AG04450 (cell line): ENCODE measurements at regions of chr10 and their contacts with region 1.

Region 1: GRCh38 chr10:63157845-63158624 is 24.9 kb downstream of the NRBF2 start:
- DNase-seq: peak; percentile 86
- H3K4me3 ChIP-seq: no peak overlapping the region
- H3K27ac ChIP-seq: no peak overlapping the region
- H3K27me3 ChIP-seq: no peaks in the 10 kb centered on the region
- CTCF ChIP-seq: peak; percentile 79

Region 2: DNA sequence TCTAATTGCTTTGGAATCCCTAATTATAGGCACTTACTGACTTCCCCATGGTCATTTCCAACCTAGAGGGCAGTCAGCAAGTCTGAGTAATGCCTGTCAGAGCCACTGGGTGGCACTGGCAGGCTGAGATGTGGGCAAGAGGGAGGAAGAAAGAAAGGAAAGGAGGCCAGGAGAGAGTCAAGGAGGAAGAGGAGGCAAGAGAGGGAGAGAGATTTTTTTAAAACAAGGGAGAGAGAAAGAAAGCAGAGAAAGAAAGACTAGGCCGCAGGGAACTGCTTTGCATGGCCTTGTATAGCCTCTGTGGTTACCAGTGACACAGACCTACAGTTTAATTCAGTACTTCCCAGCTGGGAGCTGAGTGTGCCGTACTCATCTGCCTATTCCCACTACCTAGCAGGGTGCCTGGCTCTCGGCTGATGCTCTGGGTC is 563.9 kb before region 1 on chr10:
- CTCF ChIA-PET with region 1: interaction called, 23 read pairs
- POLR2A ChIA-PET with region 1: no interaction called
- DNase-seq: no peak
- H3K4me3 ChIP-seq: no peak overlapping the region
- H3K27ac ChIP-seq: no peak overlapping the region
- H3K27me3 ChIP-seq: no peaks in the 10 kb centered on the region
- CTCF ChIP-seq: peak; percentile 98

Region 3: DNA sequence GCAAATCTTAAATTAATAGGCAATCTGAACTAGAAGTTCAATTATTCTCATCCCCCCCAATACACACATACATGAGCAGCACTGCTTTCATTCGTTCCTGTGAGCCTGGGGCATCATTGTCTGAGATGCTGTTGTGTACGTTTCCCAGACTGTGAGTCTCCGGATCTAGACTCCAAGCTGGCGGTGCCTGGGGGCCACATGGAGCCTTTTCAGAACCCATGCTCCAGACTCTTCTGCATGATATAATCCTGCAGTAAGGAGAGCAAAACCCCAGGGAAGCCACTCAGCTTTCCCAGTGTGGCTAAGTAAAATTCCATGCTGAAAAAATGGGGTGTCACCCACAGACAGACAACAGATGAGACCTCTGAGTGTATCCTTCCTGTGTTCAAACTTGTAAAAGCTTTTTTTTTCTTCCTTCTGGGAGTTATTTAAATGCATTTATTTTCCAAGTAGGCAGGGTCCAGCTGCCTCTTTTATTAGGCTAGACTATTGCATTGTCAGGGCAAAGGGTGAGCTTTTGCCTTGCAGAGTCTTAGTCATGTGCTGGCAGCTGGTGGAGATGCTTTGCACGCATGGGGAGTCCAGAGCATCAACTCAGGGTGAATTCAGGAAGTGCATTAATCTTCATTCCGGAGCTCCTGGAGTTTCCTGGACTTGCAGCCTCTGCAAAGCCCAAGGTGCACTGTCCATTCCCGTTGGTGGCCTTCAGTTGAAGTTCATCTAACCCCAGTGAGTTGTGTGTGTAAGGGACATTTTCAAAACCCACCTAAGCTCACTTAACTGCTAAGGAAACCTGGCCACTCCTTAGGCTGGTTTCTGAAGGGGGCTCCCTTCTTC is 539.2 kb before region 1 on chr10:
- CTCF ChIA-PET with region 1: interaction called, 52 read pairs
- POLR2A ChIA-PET with region 1: interaction called, 14 read pairs
- DNase-seq: no peak
- H3K4me3 ChIP-seq: no peak overlapping the region
- H3K27ac ChIP-seq: no peak overlapping the region
- H3K27me3 ChIP-seq: no peaks in the 10 kb centered on the region
- CTCF ChIP-seq: no peak

Region 4: GRCh38 chr10:63133056-63133820 is 24.8 kb before region 1 on chr10 and contains the start of gene NRBF2:
- CTCF ChIA-PET with region 1: interaction called, 15 read pairs
- POLR2A ChIA-PET with region 1: interaction called, 5 read pairs
- DNase-seq: peak; percentile 94
- H3K4me3 ChIP-seq: peak within 1 kb of the TSS; percentile 93
- H3K27ac ChIP-seq: peak within 1 kb of the TSS; percentile 94
- H3K27me3 ChIP-seq: no peaks in the 10 kb centered on the region
- CTCF ChIP-seq: peak; percentile 35
- polyA plus RNA-seq, gene NRBF2: 27.7 and 34.5 TPM in 2 replicates

Region 5: DNA sequence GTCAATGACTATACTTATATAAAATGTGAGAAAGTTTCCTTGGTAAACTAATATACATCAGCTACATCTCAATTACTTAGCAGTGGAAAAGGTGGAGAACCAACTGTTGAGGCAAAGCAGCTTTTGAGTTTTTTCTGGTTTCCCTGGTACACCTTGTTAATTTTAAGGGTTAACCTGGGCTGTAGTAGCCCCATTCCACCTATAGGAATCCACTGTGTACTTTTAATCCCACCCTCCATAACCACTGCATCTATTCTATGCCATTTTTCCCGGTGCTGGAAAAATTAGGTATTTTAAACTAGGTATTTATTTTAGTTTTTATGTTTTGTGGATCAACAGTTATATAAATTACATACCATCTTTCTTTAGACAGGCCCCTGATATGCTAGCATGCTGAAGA is 17.5 kb after region 1 on chr10:
- CTCF ChIA-PET with region 1: interaction called, 13 read pairs
- POLR2A ChIA-PET with region 1: no interaction called
- DNase-seq: no peak
- H3K4me3 ChIP-seq: no peak overlapping the region
- H3K27ac ChIP-seq: no peak overlapping the region
- H3K27me3 ChIP-seq: no peaks in the 10 kb centered on the region
- CTCF ChIP-seq: no peak